Esophagus squamous epithelium (tissue), 5 donors: ENCODE measurements at regions of chr20 and their contacts with region 1.

Region 1: GRCh38 chr20:20860078-20860806 is 147.8 kb upstream of the RALGAPA2 start:
- DNase-seq: no peak
- H3K4me3 ChIP-seq: no peak overlapping the region
- H3K27ac ChIP-seq: no peak overlapping the region
- H3K4me1 ChIP-seq: no peaks in the 10 kb centered on the region
- H3K27me3 ChIP-seq: peaks cover 0 to 37% (median 0%) of the 10 kb centered on the region in 4 donors
- CTCF ChIP-seq: peak; percentile 75 to 91 (median 86)
- POLR2A ChIP-seq: no peak

Region 2: DNA sequence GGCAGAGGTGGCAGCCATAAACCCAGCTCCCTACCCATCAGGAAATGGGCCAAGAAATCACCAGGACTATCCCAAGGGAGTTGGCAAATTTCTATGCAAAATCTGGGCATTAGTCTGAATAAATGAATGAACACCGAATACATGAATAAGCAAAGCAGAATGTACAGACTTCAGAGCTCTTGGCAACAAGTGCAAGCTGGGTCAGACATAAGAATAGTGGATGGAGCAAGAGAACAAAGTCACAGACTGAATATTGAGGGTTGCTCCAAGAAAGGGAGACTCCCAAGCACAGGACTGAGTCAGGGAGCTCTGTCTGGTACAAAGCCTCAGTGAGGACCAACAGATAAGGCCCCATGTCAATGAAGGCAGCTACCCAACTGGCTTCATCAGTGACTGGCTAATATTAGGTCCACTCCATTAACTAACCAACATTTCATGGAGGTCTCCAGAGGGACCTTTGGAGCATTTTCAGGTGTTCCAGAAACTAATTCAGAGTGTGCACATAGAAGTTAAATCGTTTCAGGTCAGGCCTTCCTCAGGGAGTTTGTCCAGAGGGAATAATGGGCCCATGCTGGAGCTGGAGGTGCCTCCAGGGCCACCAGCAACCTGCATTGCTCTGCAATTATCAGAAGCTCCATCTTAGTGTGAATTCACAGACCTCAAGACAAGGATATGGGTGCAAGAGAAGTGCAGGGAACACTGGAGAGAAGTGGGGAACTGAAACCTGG is 43.7 kb after region 1 on chr20:
- intact Hi-C with region 1: no loop called
- DNase-seq: no peak
- H3K4me3 ChIP-seq: no peak overlapping the region
- H3K27ac ChIP-seq: no peak overlapping the region
- H3K4me1 ChIP-seq: no peaks in the 10 kb centered on the region
- H3K27me3 ChIP-seq: no peaks in the 10 kb centered on the region
- CTCF ChIP-seq: no peak
- POLR2A ChIP-seq: no peak

Region 3: GRCh38 chr20:21235484-21236445 is 375.5 kb after region 1 on chr20:
- intact Hi-C with region 1: loop called (anchors 10 kb)
- DNase-seq: no peak
- H3K4me3 ChIP-seq: no peak overlapping the region
- H3K27ac ChIP-seq: no peak overlapping the region
- H3K4me1 ChIP-seq: peaks cover 0 to 11% (median 3%) of the 10 kb centered on the region in 3 donors
- H3K27me3 ChIP-seq: no peaks in the 10 kb centered on the region
- CTCF ChIP-seq: peak; percentile 60 to 81 (median 69)
- POLR2A ChIP-seq: no peak

Region 4: DNA sequence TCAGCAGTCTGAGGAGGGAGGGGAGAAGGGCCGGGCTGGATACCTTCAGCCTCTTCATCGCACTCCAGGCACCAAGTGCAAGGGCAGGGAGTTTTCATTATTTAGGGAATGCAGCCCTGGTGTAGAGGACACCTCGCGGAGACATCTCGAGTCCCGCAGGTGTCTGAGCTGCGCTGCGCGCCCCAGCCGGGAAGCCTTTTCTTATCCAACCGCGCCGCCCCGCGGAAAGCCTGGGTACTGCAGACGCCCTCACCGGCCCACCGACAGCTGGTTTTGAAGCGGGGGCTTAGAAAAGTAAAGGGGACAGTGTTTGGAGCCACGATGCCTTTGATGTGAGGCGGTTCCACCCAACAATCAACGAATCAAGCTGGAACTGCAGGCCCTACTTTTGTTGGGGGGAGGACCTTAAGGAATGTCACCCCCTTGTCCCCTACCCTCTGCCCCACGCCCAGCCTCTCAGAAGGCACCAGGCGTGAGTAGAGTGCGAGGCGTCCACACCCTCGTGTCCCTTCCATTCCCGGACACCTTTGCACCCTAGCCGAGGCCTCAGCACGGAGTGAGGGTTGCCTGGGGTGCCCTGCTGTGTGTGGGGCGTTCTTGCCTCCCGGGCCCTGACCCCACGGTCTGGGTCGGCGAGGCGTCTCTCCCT is 645.0 kb after region 1 on chr20:
- intact Hi-C with region 1: loop called (anchors 2 kb)
- DNase-seq: no peak
- H3K4me3 ChIP-seq: peak overlapping the region in 3 of 4 donors; percentile 7 to 62 (median 45)
- H3K27ac ChIP-seq: no peak overlapping the region
- H3K4me1 ChIP-seq: peaks cover 16 to 32% (median 25%) of the 10 kb centered on the region in 3 donors
- H3K27me3 ChIP-seq: peaks cover 15 to 100% (median 38%) of the 10 kb centered on the region in 4 donors
- CTCF ChIP-seq: peak; percentile 86 to 98 (median 97)
- POLR2A ChIP-seq: no peak